ENCODE measurements at regions of chr6 and their contacts with region 1.

Region 1: GRCh38 chr6:137903933-137904821 is 37.1 kb downstream of the TNFAIP3 start:
- DNase-seq: no peak
- ATAC-seq: peak; percentile 84
- H3K4me3 Mint-ChIP-seq: peak overlapping the region; percentile 59
- H3K27ac Mint-ChIP-seq: peak overlapping the region; percentile 79
- H3K4me1 Mint-ChIP-seq: peaks cover 43% of the 10 kb centered on the region
- H3K27me3 Mint-ChIP-seq: no peaks in the 10 kb centered on the region
- CTCF ChIP-seq: no peak

Region 2: GRCh38 chr6:137873273-137873762 is 30.9 kb before region 1 on chr6:
- CTCF ChIA-PET with region 1: interaction called, 4 read pairs
- POLR2A ChIA-PET with region 1: interaction called, 7 read pairs
- intact Hi-C with region 1: loop called (anchors 1 kb)
- DNase-seq: peak; percentile 50
- ATAC-seq: peak; percentile 84
- H3K4me3 Mint-ChIP-seq: peak overlapping the region; percentile 96
- H3K27ac Mint-ChIP-seq: peak overlapping the region; percentile 94
- H3K4me1 Mint-ChIP-seq: peaks cover 80% of the 10 kb centered on the region
- H3K27me3 Mint-ChIP-seq: no peaks in the 10 kb centered on the region
- CTCF ChIP-seq: no peak

Region 3: DNA sequence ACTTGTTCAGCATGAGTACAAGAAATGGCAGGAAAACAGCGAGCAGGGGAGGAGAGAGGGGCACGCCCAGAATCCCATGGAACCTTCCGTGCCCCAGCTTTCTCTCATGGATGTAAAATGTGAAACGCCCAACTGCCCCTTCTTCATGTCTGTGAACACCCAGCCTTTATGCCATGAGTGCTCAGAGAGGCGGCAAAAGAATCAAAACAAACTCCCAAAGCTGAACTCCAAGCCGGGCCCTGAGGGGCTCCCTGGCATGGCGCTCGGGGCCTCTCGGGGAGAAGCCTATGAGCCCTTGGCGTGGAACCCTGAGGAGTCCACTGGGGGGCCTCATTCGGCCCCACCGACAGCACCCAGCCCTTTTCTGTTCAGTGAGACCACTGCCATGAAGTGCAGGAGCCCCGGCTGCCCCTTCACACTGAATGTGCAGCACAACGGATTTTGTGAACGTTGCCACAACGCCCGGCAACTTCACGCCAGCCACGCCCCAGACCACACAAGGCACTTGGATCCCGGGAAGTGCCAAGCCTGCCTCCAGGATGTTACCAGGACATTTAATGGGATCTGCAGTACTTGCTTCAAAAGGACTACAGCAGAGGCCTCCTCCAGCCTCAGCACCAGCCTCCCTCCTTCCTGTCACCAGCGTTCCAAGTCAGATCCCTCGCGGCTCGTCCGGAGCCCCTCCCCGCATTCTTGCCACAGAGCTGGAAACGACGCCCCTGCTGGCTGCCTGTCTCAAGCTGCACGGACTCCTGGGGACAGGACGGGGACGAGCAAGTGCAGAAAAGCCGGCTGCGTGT is 25.5 kb before region 1 on chr6:
- CTCF ChIA-PET with region 1: interaction called, 3 read pairs
- POLR2A ChIA-PET with region 1: interaction called, 5 read pairs
- intact Hi-C with region 1: loop called (anchors 1 kb)
- DNase-seq: no peak
- ATAC-seq: no peak
- H3K4me3 Mint-ChIP-seq: no peak overlapping the region
- H3K27ac Mint-ChIP-seq: peak overlapping the region; percentile 30
- H3K4me1 Mint-ChIP-seq: peaks cover 50% of the 10 kb centered on the region
- H3K27me3 Mint-ChIP-seq: no peaks in the 10 kb centered on the region
- CTCF ChIP-seq: no peak

Region 4: DNA sequence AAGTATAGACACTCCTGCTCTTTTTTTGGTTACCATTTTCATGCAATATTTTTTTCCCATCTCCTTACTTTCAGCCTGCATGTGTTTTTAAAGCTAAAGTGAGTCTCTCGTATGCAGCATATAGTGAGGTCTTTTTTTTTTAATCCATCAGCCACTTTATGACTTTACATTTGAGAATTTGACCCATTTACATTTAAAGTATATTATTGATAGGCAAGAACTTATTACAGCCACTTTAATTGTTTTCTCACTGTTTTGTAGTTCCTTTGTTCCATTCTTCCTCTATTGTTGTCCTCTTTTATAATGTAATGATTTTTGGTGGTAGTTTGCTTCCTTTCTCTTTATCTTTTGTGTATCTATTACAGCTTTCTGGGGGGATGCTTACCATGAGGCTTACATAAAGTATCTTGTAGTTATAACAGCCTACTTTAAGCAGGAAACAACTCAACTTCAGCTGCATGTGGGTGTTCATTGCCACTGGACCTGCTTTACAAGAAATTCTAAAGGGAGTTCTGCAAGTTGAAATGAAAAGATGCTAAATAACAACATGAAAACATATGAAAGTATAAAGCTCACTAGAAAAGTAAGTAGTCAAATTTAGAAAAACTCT is 34.7 kb after region 1 on chr6:
- CTCF ChIA-PET with region 1: no interaction called
- POLR2A ChIA-PET with region 1: interaction called, 10 read pairs
- intact Hi-C with region 1: no loop called
- DNase-seq: no peak
- ATAC-seq: no peak
- H3K4me3 Mint-ChIP-seq: no peak overlapping the region
- H3K27ac Mint-ChIP-seq: no peak overlapping the region
- H3K4me1 Mint-ChIP-seq: peaks cover 18% of the 10 kb centered on the region
- H3K27me3 Mint-ChIP-seq: no peaks in the 10 kb centered on the region
- CTCF ChIP-seq: no peak

Measured in activated B cell treated with CpG ODN at 0.5 μM for 24 hours (primary cell).